Right ventricle myocardium superior (tissue), 1 donor: ENCODE measurements at regions of chr7 and their contacts with region 1.

Region 1: GRCh38 chr7:91034459-91035368 is 229.5 kb upstream of the FZD1 start:
- DNase-seq: no peak
- ATAC-seq: peak; percentile 90

Region 2: GRCh38 chr7:90455163-90456030 is 579.3 kb before region 1 on chr7:
- intact Hi-C with region 1: loop called (anchors 10 kb)
- DNase-seq: no peak
- ATAC-seq: peak; percentile 90

Region 3: DNA sequence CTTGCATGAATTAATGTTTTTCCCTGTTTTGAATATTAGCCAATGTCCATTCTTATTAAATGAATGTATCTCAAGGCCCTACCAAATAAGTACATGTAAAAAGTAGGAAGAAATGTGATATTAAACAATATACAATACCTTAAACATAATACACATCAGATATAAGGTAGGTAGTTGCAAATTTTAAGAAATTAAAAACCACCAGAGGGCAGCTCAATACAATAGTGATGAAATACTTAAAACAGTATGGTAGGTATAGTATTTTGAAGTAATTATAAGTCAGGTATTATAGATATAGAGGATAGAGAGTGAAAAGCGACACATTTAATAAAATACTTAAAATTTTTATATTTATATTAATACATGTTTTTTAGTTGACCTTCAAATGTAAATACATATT is 482.2 kb before region 1 on chr7:
- intact Hi-C with region 1: loop called (anchors 2 kb)
- DNase-seq: no peak
- ATAC-seq: peak; percentile 48

Region 4: DNA sequence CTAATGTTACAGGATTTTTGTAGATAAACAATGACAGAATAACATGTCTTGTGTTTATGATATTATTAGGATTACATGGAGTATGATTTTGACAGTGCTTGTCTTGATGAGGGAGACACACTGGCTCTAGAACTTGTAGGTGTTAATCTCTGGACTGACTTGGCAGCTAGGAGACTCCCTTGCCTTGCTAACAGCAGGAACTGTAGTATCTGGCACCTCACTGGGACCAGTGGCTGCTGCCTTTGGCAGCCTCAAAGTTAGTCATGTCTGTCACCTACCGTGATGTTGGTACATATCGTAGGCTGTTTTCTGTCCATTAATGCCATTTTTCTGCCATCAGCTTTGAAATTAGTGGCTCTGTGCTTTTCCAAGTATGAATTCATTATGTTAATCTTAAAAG is 177.1 kb before region 1 on chr7:
- intact Hi-C with region 1: loop called (anchors 10 kb)
- DNase-seq: no peak
- ATAC-seq: peak; percentile 85

Region 5: DNA sequence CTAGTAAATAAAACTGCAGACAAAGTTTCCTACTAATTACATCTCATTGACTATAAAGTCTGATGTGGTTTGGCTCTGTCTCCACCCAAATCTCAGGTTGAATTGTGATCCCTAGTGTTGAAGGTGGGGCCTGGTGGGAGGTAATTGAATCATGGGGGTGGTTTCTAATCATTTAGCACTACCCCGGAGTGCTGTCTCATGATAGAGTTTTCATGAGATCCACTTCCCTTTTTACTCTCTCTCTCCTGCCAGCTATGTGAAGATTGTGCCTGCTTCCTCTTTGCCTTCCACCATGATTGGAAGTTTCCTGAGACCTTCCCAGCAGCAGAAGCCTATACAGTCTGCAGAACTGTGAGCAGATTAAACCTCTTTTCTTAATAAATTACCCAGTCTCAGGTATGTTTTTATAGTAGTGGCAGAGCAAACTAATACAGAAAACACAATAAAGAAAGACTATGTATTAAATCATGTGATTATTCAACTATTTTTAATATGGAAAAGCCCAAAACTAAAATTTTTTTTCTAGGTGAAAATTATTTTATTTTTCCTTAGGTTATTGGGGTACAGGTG is 461.6 kb after region 1 on chr7:
- intact Hi-C with region 1: no loop called
- DNase-seq: no peak
- ATAC-seq: no peak